ENCODE measurements at regions of chr16 and their contacts with region 1.

Region 1: GRCh38 chr16:72467157-72467759 is 295.3 kb upstream of the PMFBP1 start:
- DNase-seq: peak; percentile 46
- H3K4me3 ChIP-seq: no peak overlapping the region
- H3K27ac ChIP-seq: no peak overlapping the region
- H3K4me1 ChIP-seq: no peaks in the 10 kb centered on the region
- CTCF ChIP-seq: peak; percentile 83

Region 2: DNA sequence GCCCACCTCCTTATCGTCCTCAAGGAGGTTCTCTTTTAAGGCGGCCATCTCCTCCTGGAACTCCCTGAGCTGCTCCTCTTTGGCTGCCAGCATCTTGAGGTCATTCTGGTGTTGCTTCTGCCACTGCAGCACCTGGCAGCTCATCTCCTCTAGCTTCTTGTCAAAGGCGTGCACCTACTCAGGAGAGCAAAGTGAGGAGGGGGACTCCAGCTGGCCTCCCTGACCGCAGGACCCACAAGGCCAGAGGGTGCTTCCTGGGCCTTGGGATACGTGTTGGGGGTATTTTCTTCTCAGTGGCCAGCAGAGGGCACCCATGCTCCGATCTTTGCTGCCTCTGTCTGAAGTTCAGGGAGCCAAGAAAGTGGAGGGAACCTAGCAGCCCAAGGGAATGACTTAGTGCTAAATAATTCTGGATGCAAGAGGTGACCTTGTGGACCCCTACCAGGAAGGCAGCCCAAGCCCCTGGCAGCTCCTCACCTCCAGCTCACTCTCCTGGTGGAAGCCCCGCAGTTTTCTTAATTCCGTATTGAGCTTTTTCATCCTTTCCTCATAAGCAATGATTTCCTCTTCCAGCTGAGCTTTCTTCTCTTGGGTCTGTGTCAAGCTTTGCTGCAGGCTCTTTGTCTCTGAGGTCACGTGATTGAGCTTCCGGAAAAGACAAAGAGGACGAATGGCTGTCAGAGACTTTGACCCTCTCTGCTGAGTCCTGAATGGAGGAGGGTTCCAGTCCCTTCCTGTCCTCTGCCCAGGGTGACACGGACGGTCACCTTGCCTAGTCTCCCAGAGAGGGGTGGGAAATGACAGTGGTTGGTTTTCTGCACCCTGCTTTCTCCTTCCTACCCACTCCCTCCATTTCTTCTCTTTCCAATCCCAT is 342.3 kb before region 1 on chr16:
- CTCF ChIA-PET with region 1: no interaction called
- POLR2A ChIA-PET with region 1: no interaction called
- intact Hi-C with region 1: loop called (anchors 1 kb)
- DNase-seq: peak; percentile 66
- H3K4me3 ChIP-seq: no peak overlapping the region
- H3K27ac ChIP-seq: no peak overlapping the region
- H3K4me1 ChIP-seq: no peaks in the 10 kb centered on the region
- CTCF ChIP-seq: peak; percentile 91

Measured in OCI-LY7 (cell line).